ENCODE measurements at regions of chr7 and their contacts with region 1.

Region 1: DNA sequence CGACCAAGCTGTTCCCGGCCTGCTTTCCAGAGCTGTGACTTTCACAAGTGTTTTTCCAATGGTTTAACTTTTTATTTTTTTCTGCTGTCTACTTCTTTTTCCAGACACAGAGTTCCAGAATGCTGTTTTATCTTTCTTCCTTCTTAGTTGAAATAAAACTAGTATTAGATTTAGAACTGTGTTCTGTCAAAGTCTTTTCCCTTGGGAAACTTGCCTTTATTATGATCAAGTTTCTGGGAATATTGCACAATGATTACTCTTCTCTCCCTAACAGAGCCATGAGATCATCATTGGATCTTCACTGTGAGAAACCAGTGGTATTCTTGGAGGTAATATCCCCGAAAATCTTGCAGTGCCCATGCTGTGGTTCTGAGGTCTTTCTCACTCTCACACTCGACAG is 104.9 kb upstream of the KCND2 start:
- DNase-seq: no peak
- ATAC-seq: peak; percentile 81 to 82
- H3K4me3 ChIP-seq: no peak overlapping the region
- H3K27ac ChIP-seq: peak overlapping the region; percentile 50 to 67 (median 50)
- H3K4me1 ChIP-seq: peaks cover 7 to 13% of the 10 kb centered on the region in 2 donors
- H3K27me3 ChIP-seq: no peaks in the 10 kb centered on the region
- CTCF ChIP-seq: no peak
- POLR2A ChIP-seq: no peak

Region 2: GRCh38 chr7:120052884-120053382 is 115.1 kb before region 1 on chr7:
- in situ Hi-C with region 1: no loop called
- intact Hi-C with region 1: loop called (anchors 5 kb)
- DNase-seq: peak; percentile 55 to 70
- ATAC-seq: peak; percentile 84 to 86
- H3K4me3 ChIP-seq: no peak overlapping the region
- H3K27ac ChIP-seq: peak overlapping the region; percentile 51 to 65 (median 58)
- H3K4me1 ChIP-seq: no peaks in the 10 kb centered on the region
- H3K27me3 ChIP-seq: no peaks in the 10 kb centered on the region
- CTCF ChIP-seq: no peak
- POLR2A ChIP-seq: no peak

Region 3: DNA sequence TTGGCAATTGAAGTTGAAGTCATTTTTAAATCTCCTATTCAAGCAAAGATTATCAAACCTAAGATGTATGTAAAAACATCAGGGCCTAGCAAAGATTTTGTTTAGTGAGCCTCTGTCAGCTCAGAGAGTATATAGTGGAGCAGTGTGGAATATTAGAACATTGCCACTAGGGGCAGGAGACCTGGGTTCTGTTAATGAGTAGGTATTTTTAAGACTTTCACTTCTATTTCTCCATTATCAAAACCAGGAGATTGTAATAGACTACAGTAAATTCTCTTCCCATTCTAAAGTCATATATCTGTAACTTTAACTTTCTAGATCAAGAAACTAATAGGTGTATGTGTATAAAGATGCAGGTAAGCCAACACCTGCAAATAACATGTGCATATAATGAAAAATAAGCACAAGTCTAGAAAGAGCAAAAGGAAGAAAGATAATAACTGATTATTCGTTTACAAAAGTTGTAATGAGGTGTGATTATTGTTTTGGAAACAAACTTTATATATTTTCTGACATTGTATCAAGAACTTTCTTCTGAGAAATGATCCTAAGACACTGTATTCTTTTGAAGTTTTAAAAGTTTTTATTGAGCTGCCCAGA is 169.3 kb after region 1 on chr7:
- in situ Hi-C with region 1: no loop called
- intact Hi-C with region 1: no loop called
- DNase-seq: no peak
- ATAC-seq: no peak
- H3K4me3 ChIP-seq: no peak overlapping the region
- H3K27ac ChIP-seq: no peak overlapping the region
- H3K4me1 ChIP-seq: no peaks in the 10 kb centered on the region
- H3K27me3 ChIP-seq: no peaks in the 10 kb centered on the region
- CTCF ChIP-seq: no peak
- POLR2A ChIP-seq: no peak

Measured in gastrocnemius medialis (tissue), 4 donors.